ENCODE measurements at regions of chr10 and their contacts with region 1.

Region 1: DNA sequence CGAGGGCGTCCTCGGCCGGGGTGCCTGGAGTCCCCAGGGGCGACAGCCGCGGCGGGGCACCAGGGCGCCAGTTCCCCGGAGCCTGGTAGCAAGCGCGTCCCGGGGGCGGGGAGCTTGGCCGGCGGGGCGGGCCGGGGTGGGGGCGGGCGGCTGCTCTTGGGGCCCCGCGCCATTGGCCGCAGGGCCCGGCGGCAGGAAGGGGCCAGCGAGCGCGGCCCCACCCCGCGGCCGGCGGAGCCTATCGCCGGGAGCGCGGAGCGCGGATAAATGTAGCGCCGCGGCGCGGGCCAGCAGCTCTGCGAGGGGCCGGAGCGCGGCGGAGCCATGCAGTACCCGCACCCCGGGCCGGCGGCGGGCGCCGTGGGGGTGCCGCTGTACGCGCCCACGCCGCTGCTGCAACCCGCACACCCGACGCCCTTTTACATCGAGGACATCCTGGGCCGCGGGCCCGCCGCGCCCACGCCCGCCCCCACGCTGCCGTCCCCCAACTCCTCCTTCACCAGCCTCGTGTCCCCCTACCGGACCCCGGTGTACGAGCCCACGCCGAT is at the start of gene HHEX:
- DNase-seq: peak; percentile 55 to 63
- ATAC-seq: peak; percentile 65 to 85 (median 76)
- H3K4me3 ChIP-seq: peak within 1 kb of the TSS; percentile 72
- H3K4me3 Mint-ChIP-seq: peak within 1 kb of the TSS; percentile 92
- H3K27ac ChIP-seq: peak within 1 kb of the TSS; percentile 65
- H3K27ac Mint-ChIP-seq: peak within 1 kb of the TSS; percentile 82 to 92
- H3K4me1 ChIP-seq: peaks cover 30% of the 10 kb centered on the region
- H3K4me1 Mint-ChIP-seq: peaks cover 30 to 42% of the 10 kb centered on the region in 2 donors
- H3K27me3 ChIP-seq: peaks cover 11% of the 10 kb centered on the region
- H3K27me3 Mint-ChIP-seq: peaks cover 7 to 17% of the 10 kb centered on the region in 2 donors
- CTCF ChIP-seq: no peak
- total RNA-seq, gene HHEX: 19.5 to 24.0 (median 20.3) TPM

Region 2: GRCh38 chr10:92573798-92574547 is 115.8 kb before region 1 on chr10 and contains the start of gene IDE:
- intact Hi-C with region 1: loop called (anchors 5 kb)
- DNase-seq: peak; percentile 77 to 89
- ATAC-seq: peak; percentile 73 to 88 (median 80)
- H3K4me3 ChIP-seq: peak within 1 kb of the TSS; percentile 98
- H3K4me3 Mint-ChIP-seq: peak within 1 kb of the TSS; percentile 76
- H3K27ac ChIP-seq: peak within 1 kb of the TSS; percentile 90
- H3K27ac Mint-ChIP-seq: peak within 1 kb of the TSS; percentile 82 to 92
- H3K4me1 ChIP-seq: peaks cover 11% of the 10 kb centered on the region
- H3K4me1 Mint-ChIP-seq: peaks cover 24 to 33% of the 10 kb centered on the region in 2 donors
- H3K27me3 ChIP-seq: no peaks in the 10 kb centered on the region
- H3K27me3 Mint-ChIP-seq: no peaks in the 10 kb centered on the region
- CTCF ChIP-seq: peak; percentile 72
- total RNA-seq, gene IDE: 18.2 to 23.5 (median 21.8) TPM

Region 3: DNA sequence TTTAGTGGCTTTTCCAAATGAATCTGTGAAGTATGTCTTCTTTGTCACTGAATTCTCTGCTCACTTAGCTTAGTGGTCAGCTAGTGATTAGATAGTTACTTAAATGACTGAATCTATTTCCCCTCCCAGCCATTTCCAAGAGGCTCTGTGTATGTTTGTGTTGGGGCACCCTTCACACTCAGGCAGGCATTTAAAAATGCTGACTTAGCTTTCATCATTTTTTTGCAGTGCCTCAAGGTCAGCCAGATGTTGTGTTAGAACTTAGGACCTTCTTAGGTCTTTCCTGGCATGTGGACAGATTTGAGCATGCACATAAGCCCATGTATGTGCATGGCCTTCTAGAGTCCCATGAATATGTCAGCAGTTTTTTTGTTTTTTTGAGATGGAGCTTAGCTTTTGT is 25.4 kb before region 1 on chr10:
- intact Hi-C with region 1: no loop called
- DNase-seq: no peak
- ATAC-seq: no peak
- H3K4me3 ChIP-seq: no peak overlapping the region
- H3K4me3 Mint-ChIP-seq: no peak overlapping the region
- H3K27ac ChIP-seq: no peak overlapping the region
- H3K27ac Mint-ChIP-seq: no peak overlapping the region
- H3K4me1 ChIP-seq: no peaks in the 10 kb centered on the region
- H3K4me1 Mint-ChIP-seq: no peaks in the 10 kb centered on the region
- H3K27me3 ChIP-seq: no peaks in the 10 kb centered on the region
- H3K27me3 Mint-ChIP-seq: no peaks in the 10 kb centered on the region
- CTCF ChIP-seq: no peak

Region 4: GRCh38 chr10:92747600-92747999 is 57.9 kb after region 1 on chr10:
- intact Hi-C with region 1: loop called (anchors 2 kb)
- DNase-seq: peak; percentile 59 to 62
- ATAC-seq: peak; percentile 86 to 99 (median 97)
- H3K4me3 ChIP-seq: no peak overlapping the region
- H3K4me3 Mint-ChIP-seq: peak overlapping the region; percentile 45
- H3K27ac ChIP-seq: peak overlapping the region; percentile 45
- H3K27ac Mint-ChIP-seq: peak overlapping the region; percentile 66 to 75
- H3K4me1 ChIP-seq: peaks cover 32% of the 10 kb centered on the region
- H3K4me1 Mint-ChIP-seq: peaks cover 39 to 43% of the 10 kb centered on the region in 2 donors
- H3K27me3 ChIP-seq: no peaks in the 10 kb centered on the region
- H3K27me3 Mint-ChIP-seq: peaks cover 0 to 4% of the 10 kb centered on the region in 2 donors
- CTCF ChIP-seq: no peak

Measured in natural killer cell (primary cell).